Naive thymus-derived CD4-positive, alpha-beta T cell (primary cell): ENCODE measurements at regions of chr10 and their contacts with region 1.

Region 1: DNA sequence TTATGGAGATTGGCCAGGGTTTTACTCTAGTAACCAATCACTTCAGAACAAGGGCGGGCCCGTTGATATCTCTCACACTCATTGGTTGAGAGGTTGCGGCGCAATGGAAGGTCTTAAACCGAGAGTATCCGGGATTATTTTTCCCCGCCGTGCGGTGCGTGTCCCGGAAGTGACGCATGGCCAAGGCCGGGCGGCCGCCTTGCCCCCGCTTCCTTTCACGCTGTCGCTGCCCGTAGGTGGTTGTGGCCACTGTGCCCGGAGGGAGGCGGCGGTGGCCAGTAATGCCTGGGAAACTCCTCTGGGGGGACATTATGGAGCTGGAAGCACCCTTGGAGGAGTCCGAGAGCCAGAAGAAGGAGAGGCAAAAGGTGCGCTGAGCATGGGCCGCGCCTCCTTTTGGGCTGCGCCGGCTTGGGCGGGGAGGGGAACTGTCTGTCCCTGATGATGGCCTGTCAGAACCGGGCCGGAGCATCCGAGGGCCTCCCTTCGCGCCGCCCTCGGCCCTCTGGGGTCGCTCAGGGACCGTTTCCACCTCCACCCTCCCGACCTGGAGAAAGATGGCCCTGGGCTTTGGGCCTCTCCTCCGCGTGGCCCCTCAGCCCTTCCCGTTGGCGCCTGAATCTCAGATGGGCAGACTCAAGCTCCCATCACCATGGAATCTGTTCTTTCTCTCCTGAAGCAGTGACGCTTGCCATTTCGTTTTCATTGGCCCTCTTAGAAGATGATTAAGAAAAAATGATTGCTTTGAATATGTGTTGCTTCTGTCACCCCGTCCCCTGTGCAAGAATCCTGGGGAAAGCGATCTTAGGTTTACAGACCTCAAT is at the start of gene DDX50:
- DNase-seq: peak; percentile 86 to 97 (median 95)
- ATAC-seq: peak; percentile 98
- H3K4me3 ChIP-seq: peak within 1 kb of the TSS; percentile 78
- H3K4me3 Mint-ChIP-seq: peak within 1 kb of the TSS; percentile 93 to 99 (median 97)
- H3K27ac ChIP-seq: peak within 1 kb of the TSS; percentile 95
- H3K27ac Mint-ChIP-seq: peak within 1 kb of the TSS; percentile 97 to 100 (median 99)
- H3K4me1 ChIP-seq: peaks cover 20 to 34% of the 10 kb centered on the region in 2 donors
- H3K4me1 Mint-ChIP-seq: peaks cover 28 to 53% (median 44%) of the 10 kb centered on the region in 7 donors
- H3K27me3 ChIP-seq: no peaks in the 10 kb centered on the region
- H3K27me3 Mint-ChIP-seq: no peaks in the 10 kb centered on the region
- total RNA-seq, gene DDX50: 28.3 to 49.3 (median 47.5) TPM

Region 2: DNA sequence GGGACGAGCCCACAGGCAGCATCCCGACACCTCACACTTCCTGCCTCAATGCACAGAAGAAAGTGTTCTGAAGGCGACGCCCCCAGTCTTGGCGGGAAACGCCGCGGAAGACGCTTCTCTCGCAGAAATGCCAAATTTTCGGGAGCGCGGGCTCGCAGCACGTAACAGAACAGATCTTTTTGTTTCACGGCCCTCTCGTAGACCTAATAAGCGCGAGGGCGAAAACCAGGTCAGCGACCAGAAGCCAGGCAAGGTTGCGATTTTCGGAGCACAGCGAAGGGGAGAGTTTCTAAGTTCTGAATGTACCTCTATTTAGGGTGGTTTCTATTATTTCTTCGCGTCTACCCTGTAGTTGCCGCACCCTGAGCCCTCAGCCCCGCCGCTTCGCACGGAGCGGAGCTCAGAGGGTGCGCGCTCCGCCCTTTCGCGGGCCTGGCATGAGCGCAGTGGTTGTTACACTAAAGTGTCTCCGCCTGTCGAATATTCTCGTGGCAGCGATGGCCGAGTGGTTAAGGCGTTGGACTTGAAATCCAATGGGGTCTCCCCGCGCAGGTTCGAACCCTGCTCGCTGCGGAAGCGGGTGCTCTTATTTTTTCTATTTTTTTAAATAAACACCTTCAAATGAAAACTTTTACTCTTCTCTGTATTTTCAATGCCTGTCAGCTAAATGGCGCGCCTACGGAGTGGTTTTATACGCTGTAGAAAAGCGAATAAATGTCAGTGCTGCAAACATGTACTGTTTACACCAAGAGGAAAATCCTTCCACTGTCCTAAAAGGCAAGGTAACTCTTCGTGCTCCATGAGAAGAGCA is 1137.1 kb before region 1 on chr10:
- CTCF ChIA-PET with region 1: no interaction called
- POLR2A ChIA-PET with region 1: no interaction called
- intact Hi-C with region 1: loop called in 1 of 2 experiments (anchors 1 kb)
- DNase-seq: peak; percentile 96 to 99 (median 98)
- ATAC-seq: peak; percentile 88
- H3K4me3 ChIP-seq: peak overlapping the region; percentile 99
- H3K4me3 Mint-ChIP-seq: peak overlapping the region; percentile 81 to 99 (median 94)
- H3K27ac ChIP-seq: peak overlapping the region; percentile 81
- H3K27ac Mint-ChIP-seq: peak overlapping the region; percentile 95 to 100 (median 100)
- H3K4me1 ChIP-seq: peaks cover 4 to 6% of the 10 kb centered on the region in 2 donors
- H3K4me1 Mint-ChIP-seq: peaks cover 0 to 37% (median 14%) of the 10 kb centered on the region in 7 donors
- H3K27me3 ChIP-seq: no peaks in the 10 kb centered on the region
- H3K27me3 Mint-ChIP-seq: peaks cover 0 to 16% (median 0%) of the 10 kb centered on the region in 5 donors

Region 3: DNA sequence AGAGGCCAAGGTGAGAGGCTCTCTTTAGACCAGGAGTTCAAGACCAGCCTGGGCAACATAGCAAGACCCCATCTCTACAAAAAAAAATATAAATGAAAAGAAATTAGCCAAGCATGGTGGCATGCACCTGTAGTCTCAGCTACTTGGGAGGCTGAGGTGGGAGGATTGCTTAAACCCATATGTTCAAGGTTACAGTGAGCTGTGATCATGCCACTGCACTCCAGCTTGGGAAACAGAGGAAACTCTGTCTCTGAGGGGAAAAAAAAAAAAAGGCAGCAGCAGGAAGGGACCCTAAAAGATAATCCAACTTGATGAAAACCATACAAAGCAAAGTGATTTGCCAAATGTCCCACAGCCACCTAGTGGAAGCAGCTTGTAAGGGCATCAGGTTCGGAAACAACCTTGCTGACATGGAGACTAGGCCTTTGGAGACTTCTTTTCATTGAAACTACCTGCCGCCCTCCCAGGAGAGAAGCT is 553.0 kb before region 1 on chr10:
- CTCF ChIA-PET with region 1: no interaction called
- POLR2A ChIA-PET with region 1: no interaction called
- intact Hi-C with region 1: loop called in 1 of 2 experiments (anchors 1 kb)
- DNase-seq: peak in 8 of 9 donors; percentile 30 to 53 (median 44)
- ATAC-seq: peak; percentile 81
- H3K4me3 ChIP-seq: no peak overlapping the region
- H3K4me3 Mint-ChIP-seq: no peak overlapping the region
- H3K27ac ChIP-seq: peak overlapping the region; percentile 15
- H3K27ac Mint-ChIP-seq: peak overlapping the region in 8 of 9 donors; percentile 31 to 90 (median 81)
- H3K4me1 ChIP-seq: no peaks in the 10 kb centered on the region
- H3K4me1 Mint-ChIP-seq: peaks cover 0 to 13% (median 4%) of the 10 kb centered on the region in 7 donors
- H3K27me3 ChIP-seq: no peaks in the 10 kb centered on the region
- H3K27me3 Mint-ChIP-seq: no peaks in the 10 kb centered on the region

Region 4: GRCh38 chr10:68550747-68551411 is 350.4 kb before region 1 on chr10:
- CTCF ChIA-PET with region 1: interaction called, 9 read pairs
- POLR2A ChIA-PET with region 1: interaction called, 3 read pairs
- intact Hi-C with region 1: loop called (anchors 1 kb)
- DNase-seq: peak in 8 of 9 donors; percentile 18 to 55 (median 42)
- ATAC-seq: peak; percentile 83
- H3K4me3 ChIP-seq: no peak overlapping the region
- H3K4me3 Mint-ChIP-seq: no peak overlapping the region
- H3K27ac ChIP-seq: no peak overlapping the region
- H3K27ac Mint-ChIP-seq: peak overlapping the region in 1 of 9 donors; percentile 3
- H3K4me1 ChIP-seq: no peaks in the 10 kb centered on the region
- H3K4me1 Mint-ChIP-seq: peaks cover 0 to 5% (median 0%) of the 10 kb centered on the region in 7 donors
- H3K27me3 ChIP-seq: no peaks in the 10 kb centered on the region
- H3K27me3 Mint-ChIP-seq: peaks cover 0 to 6% (median 0%) of the 10 kb centered on the region in 5 donors

Region 5: GRCh38 chr10:68955832-68956532 is 54.7 kb after region 1 on chr10 and contains the start of gene DDX21:
- CTCF ChIA-PET with region 1: no interaction called
- POLR2A ChIA-PET with region 1: interaction called, 11 read pairs
- intact Hi-C with region 1: loop called (anchors 1 kb)
- DNase-seq: peak; percentile 70 to 94 (median 89)
- ATAC-seq: peak; percentile 89
- H3K4me3 ChIP-seq: peak within 1 kb of the TSS; percentile 71
- H3K4me3 Mint-ChIP-seq: peak within 1 kb of the TSS; percentile 91 to 100 (median 98)
- H3K27ac ChIP-seq: peak within 1 kb of the TSS; percentile 97
- H3K27ac Mint-ChIP-seq: peak within 1 kb of the TSS; percentile 96 to 100 (median 99)
- H3K4me1 ChIP-seq: peaks cover 7 to 11% of the 10 kb centered on the region in 2 donors
- H3K4me1 Mint-ChIP-seq: peaks cover 15 to 53% (median 33%) of the 10 kb centered on the region in 7 donors
- H3K27me3 ChIP-seq: no peaks in the 10 kb centered on the region
- H3K27me3 Mint-ChIP-seq: no peaks in the 10 kb centered on the region
- total RNA-seq, gene DDX21: 43.5 to 101 (median 86.7) TPM

Region 6: GRCh38 chr10:69061305-69062161 is 160.2 kb after region 1 on chr10:
- CTCF ChIA-PET with region 1: no interaction called
- POLR2A ChIA-PET with region 1: no interaction called
- intact Hi-C with region 1: no loop called
- DNase-seq: peak in 7 of 9 donors; percentile 17 to 52 (median 50)
- ATAC-seq: peak; percentile 72
- H3K4me3 ChIP-seq: peak overlapping the region; percentile 15
- H3K4me3 Mint-ChIP-seq: peak overlapping the region; percentile 73 to 90 (median 83)
- H3K27ac ChIP-seq: peak overlapping the region; percentile 50
- H3K27ac Mint-ChIP-seq: peak overlapping the region; percentile 70 to 96 (median 90)
- H3K4me1 ChIP-seq: peaks cover 25% of the 10 kb centered on the region in 2 donors
- H3K4me1 Mint-ChIP-seq: peaks cover 33 to 60% (median 38%) of the 10 kb centered on the region in 7 donors
- H3K27me3 ChIP-seq: no peaks in the 10 kb centered on the region
- H3K27me3 Mint-ChIP-seq: no peaks in the 10 kb centered on the region

Region 7: GRCh38 chr10:69179743-69180524 is 278.6 kb after region 1 on chr10 and contains the start of gene SUPV3L1:
- CTCF ChIA-PET with region 1: no interaction called
- POLR2A ChIA-PET with region 1: no interaction called
- intact Hi-C with region 1: loop called in 1 of 2 experiments (anchors 5 kb)
- DNase-seq: peak; percentile 72 to 91 (median 87)
- ATAC-seq: peak; percentile 87
- H3K4me3 ChIP-seq: peak within 1 kb of the TSS; percentile 83
- H3K4me3 Mint-ChIP-seq: peak within 1 kb of the TSS; percentile 85 to 98 (median 96)
- H3K27ac ChIP-seq: peak within 1 kb of the TSS; percentile 95
- H3K27ac Mint-ChIP-seq: peak within 1 kb of the TSS; percentile 98 to 100 (median 99)
- H3K4me1 ChIP-seq: peaks cover 12 to 15% of the 10 kb centered on the region in 2 donors
- H3K4me1 Mint-ChIP-seq: peaks cover 22 to 55% (median 38%) of the 10 kb centered on the region in 7 donors
- H3K27me3 ChIP-seq: no peaks in the 10 kb centered on the region
- H3K27me3 Mint-ChIP-seq: no peaks in the 10 kb centered on the region
- total RNA-seq, gene SUPV3L1: 39.3 to 63.2 (median 42.1) TPM

Region 8: DNA sequence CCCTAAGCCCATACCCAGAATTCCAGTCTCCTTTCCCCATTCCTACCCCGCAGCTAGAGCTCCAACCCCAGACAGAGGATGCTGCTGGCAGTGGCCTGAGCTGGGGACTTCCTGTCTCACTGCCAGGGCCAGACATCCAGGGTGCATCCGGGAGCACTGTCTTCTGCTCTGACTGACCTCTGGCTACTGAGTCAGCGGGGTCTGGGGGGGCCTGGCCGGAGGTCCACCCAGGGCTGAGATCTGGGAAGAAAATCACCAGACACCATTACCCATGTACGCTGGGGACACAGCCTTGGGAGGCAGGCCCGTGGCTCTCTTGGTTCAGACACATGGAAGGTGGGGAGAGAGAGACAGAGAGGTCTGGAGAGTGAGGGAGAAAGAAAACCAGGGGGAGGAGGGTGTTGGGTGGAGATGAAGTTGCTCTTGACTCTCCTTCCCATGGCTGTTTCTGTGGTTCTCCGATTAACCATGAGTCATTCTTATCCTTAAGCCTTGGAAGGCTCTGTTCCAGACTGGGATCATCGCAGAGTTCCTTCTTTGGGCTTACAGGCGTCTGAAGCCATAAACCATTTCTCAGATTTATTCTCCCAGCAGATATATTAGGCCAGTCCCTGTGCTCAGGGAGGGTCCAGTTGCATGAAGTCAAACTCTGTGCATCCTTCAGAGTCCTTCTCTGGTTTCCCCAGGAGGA is 573.6 kb after region 1 on chr10:
- CTCF ChIA-PET with region 1: no interaction called
- POLR2A ChIA-PET with region 1: no interaction called
- intact Hi-C with region 1: no loop called
- DNase-seq: no peak
- ATAC-seq: no peak
- H3K4me3 ChIP-seq: no peak overlapping the region
- H3K4me3 Mint-ChIP-seq: no peak overlapping the region
- H3K27ac ChIP-seq: no peak overlapping the region
- H3K27ac Mint-ChIP-seq: no peak overlapping the region
- H3K4me1 ChIP-seq: no peaks in the 10 kb centered on the region
- H3K4me1 Mint-ChIP-seq: peaks cover 0 to 12% (median 0%) of the 10 kb centered on the region in 7 donors
- H3K27me3 ChIP-seq: no peaks in the 10 kb centered on the region
- H3K27me3 Mint-ChIP-seq: peaks cover 0 to 28% (median 5%) of the 10 kb centered on the region in 5 donors